Activated CD4-positive, alpha-beta T cell treated with anti-CD3 and anti-CD28 coated beads, Interleukin-2, amount 10 ng/mL, durations not matched to agents 24 days and 14 days (primary cell): ENCODE measurements at regions of chr9 and their contacts with region 1.

Region 1: DNA sequence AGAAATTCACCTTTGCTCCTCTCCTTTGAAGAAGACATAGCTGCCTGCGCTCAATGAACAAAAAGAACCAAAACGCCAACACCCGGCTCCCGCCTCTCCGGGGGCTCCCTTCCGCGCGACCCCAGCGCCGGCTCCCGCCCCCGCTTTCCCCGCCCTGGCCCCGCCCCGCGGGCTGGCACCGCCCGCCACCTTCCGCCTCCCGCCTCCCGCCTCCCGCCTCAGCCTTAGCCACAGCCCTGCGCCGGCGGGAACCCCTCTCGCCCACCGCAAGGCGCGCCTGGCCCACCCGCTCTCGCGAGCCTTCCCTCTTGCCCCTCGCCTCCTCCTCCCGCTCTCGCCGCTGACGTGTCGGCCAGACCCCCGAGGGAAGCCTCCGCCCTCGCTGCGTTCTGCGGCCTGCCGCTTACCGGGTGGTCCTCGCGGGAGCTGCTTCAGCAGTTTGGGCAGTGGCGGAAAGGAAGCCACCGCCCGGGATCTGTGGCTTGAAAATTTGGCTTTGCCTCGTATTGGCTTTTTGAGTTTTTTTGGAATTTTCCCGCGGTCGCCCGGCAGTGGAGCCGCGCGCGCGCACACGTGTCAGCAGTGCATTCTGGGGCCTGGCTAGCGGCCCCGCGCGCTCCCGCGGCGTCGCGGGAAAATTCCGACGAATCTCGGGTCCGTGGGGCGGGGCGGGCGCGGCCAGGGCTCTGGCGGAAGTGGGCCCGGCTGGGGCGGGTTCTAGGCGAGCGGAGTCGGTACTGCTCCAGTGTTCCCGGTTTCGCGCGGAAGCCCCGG is at the start of gene FANCC:
- DNase-seq: peak; percentile 96
- H3K4me3 Mint-ChIP-seq: peak within 1 kb of the TSS; percentile 91
- H3K27ac Mint-ChIP-seq: peak within 1 kb of the TSS; percentile 96
- H3K4me1 Mint-ChIP-seq: peaks cover 16% of the 10 kb centered on the region
- H3K27me3 Mint-ChIP-seq: peaks cover 23% of the 10 kb centered on the region
- total RNA-seq, gene FANCC: 16.7 and 18.0 TPM in 2 replicates

Region 2: GRCh38 chr9:95462249-95463147 is 145.2 kb after region 1 on chr9:
- intact Hi-C with region 1: loop called (anchors 2 kb)
- DNase-seq: peak; percentile 94
- H3K4me3 Mint-ChIP-seq: peak overlapping the region; percentile 78
- H3K27ac Mint-ChIP-seq: peak overlapping the region; percentile 70
- H3K4me1 Mint-ChIP-seq: peaks cover 23% of the 10 kb centered on the region
- H3K27me3 Mint-ChIP-seq: peaks cover 66% of the 10 kb centered on the region

Region 3: GRCh38 chr9:95875305-95876137 is 558.2 kb after region 1 on chr9 and contains the start of gene ERCC6L2:
- intact Hi-C with region 1: loop called (anchors 2 kb)
- DNase-seq: peak; percentile 98
- H3K4me3 Mint-ChIP-seq: no peak within 1 kb of the TSS
- H3K27ac Mint-ChIP-seq: no peak within 1 kb of the TSS
- H3K4me1 Mint-ChIP-seq: peaks cover 37% of the 10 kb centered on the region
- H3K27me3 Mint-ChIP-seq: no peaks in the 10 kb centered on the region
- total RNA-seq, gene ERCC6L2: 32.1 and 35.7 TPM in 2 replicates

Region 4: GRCh38 chr9:96009690-96010472 is 692.6 kb after region 1 on chr9:
- intact Hi-C with region 1: loop called (anchors 5 kb)
- DNase-seq: peak; percentile 93
- H3K4me3 Mint-ChIP-seq: peak overlapping the region; percentile 52
- H3K27ac Mint-ChIP-seq: peak overlapping the region; percentile 96
- H3K4me1 Mint-ChIP-seq: peaks cover 51% of the 10 kb centered on the region
- H3K27me3 Mint-ChIP-seq: no peaks in the 10 kb centered on the region